Activated naive CD4-positive, alpha-beta T cell treated with anti-CD3 and anti-CD28 coated beads for 36 hours (primary cell): ENCODE measurements at regions of chr11 and their contacts with region 1.

Region 1: GRCh38 chr11:121035780-121036179 is 11.9 kb downstream of the TBCEL start:
- DNase-seq: peak; percentile 12
- H3K4me3 Mint-ChIP-seq: no peak overlapping the region
- H3K27ac Mint-ChIP-seq: no peak overlapping the region
- H3K4me1 Mint-ChIP-seq: peaks cover 20% of the 10 kb centered on the region
- H3K27me3 Mint-ChIP-seq: no peaks in the 10 kb centered on the region

Region 2: GRCh38 chr11:121023848-121024751 is 11.7 kb before region 1 on chr11 and contains the start of gene TBCEL:
- CTCF ChIA-PET with region 1: no interaction called
- intact Hi-C with region 1: loop called (anchors 1 kb)
- DNase-seq: peak; percentile 89
- H3K4me3 Mint-ChIP-seq: peak within 1 kb of the TSS; percentile 83
- H3K27ac Mint-ChIP-seq: peak within 1 kb of the TSS; percentile 44
- H3K4me1 Mint-ChIP-seq: peaks cover 14% of the 10 kb centered on the region
- H3K27me3 Mint-ChIP-seq: no peaks in the 10 kb centered on the region
- total RNA-seq, gene TBCEL: 5.2 to 5.3 TPM

Region 3: DNA sequence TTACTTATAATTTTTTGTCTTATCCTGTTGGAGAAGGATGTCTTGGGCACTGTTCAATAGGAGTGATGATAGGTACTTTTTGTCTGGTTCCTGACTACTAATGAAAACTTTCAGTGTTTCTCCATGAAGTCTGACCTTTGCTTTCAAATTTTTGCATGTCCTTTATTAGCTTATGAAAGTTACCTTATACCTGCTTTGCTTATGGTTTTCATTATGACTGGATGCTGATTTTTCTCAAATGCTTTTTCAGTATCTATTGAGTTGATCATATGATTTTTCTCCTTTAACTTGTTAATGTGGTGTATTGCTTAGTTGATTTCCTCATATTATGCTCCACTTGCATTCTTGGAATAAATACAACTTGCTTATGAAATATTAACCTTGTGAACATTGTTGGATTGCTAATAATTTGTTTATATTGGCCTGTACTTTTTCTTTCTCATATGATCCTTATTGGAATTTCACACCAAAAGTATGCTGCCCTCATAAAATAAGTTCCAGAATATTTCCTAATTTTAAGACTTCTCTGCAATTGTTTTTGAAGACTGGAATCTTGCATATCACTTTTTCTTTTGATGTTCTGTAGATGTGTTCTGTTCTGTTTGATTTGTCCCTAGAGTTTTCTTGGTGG is 171.8 kb after region 1 on chr11:
- CTCF ChIA-PET with region 1: no interaction called
- intact Hi-C with region 1: no loop called
- DNase-seq: no peak
- H3K4me3 Mint-ChIP-seq: no peak overlapping the region
- H3K27ac Mint-ChIP-seq: no peak overlapping the region
- H3K4me1 Mint-ChIP-seq: no peaks in the 10 kb centered on the region
- H3K27me3 Mint-ChIP-seq: peaks cover 4% of the 10 kb centered on the region